ENCODE measurements at regions of chr9 and their contacts with region 1.

Region 1: DNA sequence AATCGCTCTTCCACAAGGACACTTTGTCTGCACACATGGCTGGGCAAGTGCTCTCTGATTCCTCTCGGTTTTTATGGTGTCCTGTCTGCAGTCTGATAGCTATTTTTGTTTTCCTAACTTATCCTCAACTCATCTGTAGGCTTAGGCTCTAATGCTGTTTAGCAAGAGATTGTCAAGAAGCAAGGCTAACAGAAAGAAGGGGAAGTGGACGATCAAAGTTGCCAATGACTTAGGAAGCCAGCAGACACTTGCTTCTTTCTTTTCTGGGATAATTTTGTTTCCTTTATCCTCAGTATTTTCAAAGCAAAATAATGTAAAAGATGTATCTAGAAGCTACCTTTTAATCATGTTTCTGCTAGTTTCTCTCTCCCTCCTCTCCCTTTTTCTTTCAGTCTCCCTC is 130.7 kb downstream of the PRKACG start:
- DNase-seq: no peak
- ATAC-seq: no peak
- H3K4me3 ChIP-seq: no peak overlapping the region
- H3K27ac ChIP-seq: no peak overlapping the region
- H3K4me1 ChIP-seq: peaks cover 0 to 5% (median 0%) of the 10 kb centered on the region in 12 donors
- H3K27me3 ChIP-seq: no peaks in the 10 kb centered on the region
- CTCF ChIP-seq: no peak
- POLR2A ChIP-seq: no peak

Region 2: DNA sequence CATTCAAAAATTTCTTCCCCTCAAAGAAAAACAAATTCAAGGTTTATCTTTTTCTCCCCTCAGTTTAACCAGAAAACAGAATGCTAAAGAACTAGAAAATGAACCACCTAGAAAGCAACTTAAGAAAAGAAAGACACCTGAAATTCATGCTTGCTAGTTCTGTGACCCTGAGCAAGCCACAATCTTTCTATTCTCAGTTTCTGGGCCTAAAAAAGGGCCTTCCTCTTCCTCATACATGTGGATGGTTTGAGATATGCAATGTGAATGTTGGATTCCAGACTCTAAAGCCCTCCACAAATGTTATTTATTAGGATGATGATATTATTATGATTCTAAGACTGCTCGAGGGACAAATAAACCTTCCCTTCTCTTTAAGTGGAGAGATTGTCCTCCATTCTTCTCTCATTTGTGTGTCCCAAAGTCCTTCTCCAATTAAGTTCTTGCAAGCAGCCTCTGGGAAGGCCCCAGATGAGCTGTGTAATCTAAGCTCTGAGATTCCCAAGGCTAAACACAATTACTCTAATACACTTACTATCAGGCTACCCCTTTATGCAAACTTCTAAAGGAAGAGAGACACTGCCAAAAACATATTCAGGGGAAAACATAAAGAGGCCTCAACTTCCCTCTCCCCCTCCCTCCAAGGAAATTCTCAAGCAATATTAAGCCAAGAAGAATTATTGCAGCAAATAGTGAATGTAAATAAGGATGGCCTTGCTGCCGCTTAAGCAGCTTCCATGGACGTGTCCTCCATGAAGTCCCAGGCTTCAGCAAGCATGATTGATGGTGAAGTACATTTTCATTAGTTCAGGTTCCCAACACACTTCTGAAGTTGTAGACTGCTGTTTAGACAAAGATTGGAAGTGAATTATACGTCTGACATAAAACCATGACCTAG is 50.5 kb after region 1 on chr9:
- intact Hi-C with region 1: loop called in 1 of 10 experiments (anchors 5 kb)
- DNase-seq: no peak
- ATAC-seq: no peak
- H3K4me3 ChIP-seq: no peak overlapping the region
- H3K27ac ChIP-seq: peak overlapping the region in 5 of 12 donors; percentile 1 to 33 (median 16)
- H3K4me1 ChIP-seq: peaks cover 0 to 9% (median 0%) of the 10 kb centered on the region in 12 donors
- H3K27me3 ChIP-seq: no peaks in the 10 kb centered on the region
- CTCF ChIP-seq: no peak
- POLR2A ChIP-seq: no peak

Measured in heart left ventricle (tissue), 16 donors.